ENCODE measurements at regions of chr4 and their contacts with region 1.

Region 1: GRCh38 chr4:113901994-113902787 is 77.3 kb downstream of the ARSJ start:
- DNase-seq: peak; percentile 27 to 86 (median 72)
- ATAC-seq: peak; percentile 88
- H3K4me3 ChIP-seq: peak overlapping the region; percentile 7
- H3K4me3 Mint-ChIP-seq: peak overlapping the region; percentile 32 to 78 (median 70)
- H3K27ac ChIP-seq: peak overlapping the region; percentile 65
- H3K27ac Mint-ChIP-seq: peak overlapping the region; percentile 74 to 99 (median 96)
- H3K4me1 ChIP-seq: peaks cover 65 to 72% of the 10 kb centered on the region in 2 donors
- H3K4me1 Mint-ChIP-seq: peaks cover 23 to 87% (median 82%) of the 10 kb centered on the region in 7 donors
- H3K27me3 ChIP-seq: no peaks in the 10 kb centered on the region
- H3K27me3 Mint-ChIP-seq: no peaks in the 10 kb centered on the region

Region 2: GRCh38 chr4:113825272-113825671 is 76.9 kb before region 1 on chr4:
- CTCF ChIA-PET with region 1: no interaction called
- POLR2A ChIA-PET with region 1: interaction called, 3 read pairs
- intact Hi-C with region 1: loop called in 1 of 2 experiments (anchors 1 kb)
- DNase-seq: peak in 7 of 9 donors; percentile 10 to 63 (median 52)
- ATAC-seq: peak; percentile 77
- H3K4me3 ChIP-seq: no peak overlapping the region
- H3K4me3 Mint-ChIP-seq: peak overlapping the region in 9 of 10 donors; percentile 3 to 70 (median 57)
- H3K27ac ChIP-seq: peak overlapping the region; percentile 26
- H3K27ac Mint-ChIP-seq: peak overlapping the region in 8 of 9 donors; percentile 5 to 88 (median 38)
- H3K4me1 ChIP-seq: peaks cover 7 to 34% of the 10 kb centered on the region in 2 donors
- H3K4me1 Mint-ChIP-seq: peaks cover 29 to 52% (median 47%) of the 10 kb centered on the region in 7 donors
- H3K27me3 ChIP-seq: no peaks in the 10 kb centered on the region
- H3K27me3 Mint-ChIP-seq: peaks cover 0 to 5% (median 0%) of the 10 kb centered on the region in 5 donors

Region 3: GRCh38 chr4:113849771-113850170 is 52.4 kb before region 1 on chr4:
- CTCF ChIA-PET with region 1: no interaction called
- POLR2A ChIA-PET with region 1: no interaction called
- intact Hi-C with region 1: no loop called
- DNase-seq: no peak
- ATAC-seq: no peak
- H3K4me3 ChIP-seq: no peak overlapping the region
- H3K4me3 Mint-ChIP-seq: no peak overlapping the region
- H3K27ac ChIP-seq: no peak overlapping the region
- H3K27ac Mint-ChIP-seq: no peak overlapping the region
- H3K4me1 ChIP-seq: no peaks in the 10 kb centered on the region
- H3K4me1 Mint-ChIP-seq: peaks cover 0 to 5% (median 0%) of the 10 kb centered on the region in 7 donors
- H3K27me3 ChIP-seq: no peaks in the 10 kb centered on the region
- H3K27me3 Mint-ChIP-seq: peaks cover 0 to 3% (median 0%) of the 10 kb centered on the region in 5 donors

Region 4: DNA sequence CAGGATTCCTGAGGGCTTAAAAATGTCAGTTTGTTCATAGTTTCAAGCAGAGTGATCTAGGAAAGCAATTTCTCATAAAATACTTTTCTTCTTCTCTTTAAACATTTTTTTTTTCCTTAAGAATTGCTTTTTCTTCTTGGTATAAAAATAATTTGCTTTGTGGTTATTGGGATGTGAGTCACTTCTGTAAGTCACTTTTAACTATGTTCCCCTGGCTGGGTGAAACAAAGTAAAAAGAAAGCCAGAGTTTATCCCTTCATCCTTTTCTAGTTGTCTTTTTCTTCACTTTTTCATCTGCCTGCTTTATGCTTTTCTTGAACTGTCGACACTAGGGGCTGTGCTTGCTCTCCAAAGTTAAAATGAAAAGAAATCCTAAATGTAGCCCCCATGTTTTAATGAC is 43.7 kb after region 1 on chr4:
- CTCF ChIA-PET with region 1: no interaction called
- POLR2A ChIA-PET with region 1: interaction called, 3 read pairs
- intact Hi-C with region 1: loop called in 1 of 2 experiments (anchors 2 kb)
- DNase-seq: no peak
- ATAC-seq: no peak
- H3K4me3 ChIP-seq: no peak overlapping the region
- H3K4me3 Mint-ChIP-seq: no peak overlapping the region
- H3K27ac ChIP-seq: no peak overlapping the region
- H3K27ac Mint-ChIP-seq: no peak overlapping the region
- H3K4me1 ChIP-seq: peaks cover 0 to 7% of the 10 kb centered on the region in 2 donors
- H3K4me1 Mint-ChIP-seq: peaks cover 9 to 25% (median 19%) of the 10 kb centered on the region in 7 donors
- H3K27me3 ChIP-seq: no peaks in the 10 kb centered on the region
- H3K27me3 Mint-ChIP-seq: peaks cover 0 to 6% (median 0%) of the 10 kb centered on the region in 5 donors

Region 5: DNA sequence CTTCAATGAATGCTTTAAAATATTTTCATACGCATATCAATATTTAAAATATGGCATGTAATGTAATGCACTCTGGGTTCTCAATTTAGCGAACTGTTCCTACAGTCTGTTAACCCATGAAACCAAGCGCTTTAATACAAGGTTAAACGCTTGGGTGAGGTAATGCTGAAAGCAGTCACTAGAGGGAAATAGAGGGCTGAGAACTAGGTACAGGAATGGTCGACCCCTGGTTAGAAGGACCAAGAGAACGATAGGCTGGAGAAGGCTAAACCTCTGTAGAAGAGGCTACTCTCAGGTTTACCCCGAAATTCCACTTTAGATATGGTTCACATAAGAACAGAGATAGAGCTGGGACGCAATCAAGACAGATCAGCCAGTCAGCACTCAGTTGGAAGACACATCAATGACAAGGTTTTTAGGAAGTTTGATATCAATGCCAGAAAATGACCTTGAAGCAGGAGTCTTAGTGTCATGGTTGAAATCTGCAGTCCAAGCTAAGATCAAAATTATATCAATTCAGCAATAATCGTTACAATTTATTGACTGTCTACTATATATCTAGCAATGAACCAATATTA is 50.4 kb after region 1 on chr4:
- CTCF ChIA-PET with region 1: no interaction called
- POLR2A ChIA-PET with region 1: interaction called, 3 read pairs
- intact Hi-C with region 1: loop called in 1 of 2 experiments (anchors 1 kb)
- DNase-seq: peak in 5 of 9 donors; percentile 8 to 33 (median 21)
- ATAC-seq: peak; percentile 81
- H3K4me3 ChIP-seq: no peak overlapping the region
- H3K4me3 Mint-ChIP-seq: peak overlapping the region in 1 of 10 donors; percentile 13
- H3K27ac ChIP-seq: no peak overlapping the region
- H3K27ac Mint-ChIP-seq: no peak overlapping the region
- H3K4me1 ChIP-seq: no peaks in the 10 kb centered on the region
- H3K4me1 Mint-ChIP-seq: peaks cover 0 to 30% (median 20%) of the 10 kb centered on the region in 7 donors
- H3K27me3 ChIP-seq: no peaks in the 10 kb centered on the region
- H3K27me3 Mint-ChIP-seq: peaks cover 0 to 19% (median 5%) of the 10 kb centered on the region in 5 donors

Measured in naive thymus-derived CD4-positive, alpha-beta T cell (primary cell).